ENCODE measurements at regions of chr15 and their contacts with region 1.

Region 1: DNA sequence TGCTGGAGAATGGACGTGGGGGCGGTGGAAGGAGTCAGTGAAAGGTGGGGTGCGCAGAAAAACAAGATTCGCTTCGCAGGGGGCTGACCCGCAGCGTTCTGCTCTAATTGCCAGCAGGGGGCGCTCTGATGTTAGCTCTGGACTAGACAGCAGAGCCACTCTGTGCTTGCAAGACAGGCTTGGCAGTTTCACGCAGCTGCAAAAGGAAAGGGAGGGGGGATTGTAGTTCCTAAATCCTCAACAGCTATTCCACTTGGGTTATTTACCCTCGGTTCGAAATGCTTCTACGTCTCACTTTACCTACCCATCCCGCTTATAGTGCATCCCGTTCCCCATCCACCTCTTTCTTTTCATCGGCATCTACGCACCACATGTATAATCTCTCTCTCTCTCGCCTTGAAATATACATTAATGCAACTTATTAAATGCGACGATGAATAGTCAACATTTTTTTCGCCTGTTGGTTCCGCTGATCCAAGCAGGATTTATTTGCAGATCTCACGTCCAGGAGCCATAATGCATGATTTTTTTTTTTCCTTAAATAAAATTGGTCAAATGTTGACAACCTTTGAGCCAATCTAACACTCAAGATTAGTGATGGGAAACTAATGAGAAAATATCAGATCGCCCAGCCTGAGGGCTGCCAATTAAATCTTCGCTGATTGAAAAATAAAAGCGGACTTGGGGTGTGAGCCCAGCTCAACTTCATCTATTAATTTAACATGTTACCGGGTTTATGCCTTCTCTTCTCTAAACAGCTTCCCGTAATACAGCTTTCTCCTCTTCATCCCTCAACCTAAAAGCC is 216.4 kb downstream of the MEIS2 start:
- DNase-seq: peak in 1 of 2 experiments; percentile 93
- H3K4me3 ChIP-seq: peak overlapping the region in 1 of 4 experiments; percentile 45; a peak in 2 of 8 replicates
- H3K27ac ChIP-seq: no peak overlapping the region
- H3K4me1 ChIP-seq: peaks cover 21 to 49% (median 28%) of the 10 kb centered on the region in 4 experiments
- H3K27me3 ChIP-seq: peaks cover 77 to 100% (median 92%) of the 10 kb centered on the region in 4 experiments
- CTCF ChIP-seq: peak; percentile 85 to 88 (median 85)
- EP300 ChIP-seq: no peak
- POLR2A ChIP-seq: no peak
- RAD21 ChIP-seq: peak; percentile 96 to 97

Region 2: DNA sequence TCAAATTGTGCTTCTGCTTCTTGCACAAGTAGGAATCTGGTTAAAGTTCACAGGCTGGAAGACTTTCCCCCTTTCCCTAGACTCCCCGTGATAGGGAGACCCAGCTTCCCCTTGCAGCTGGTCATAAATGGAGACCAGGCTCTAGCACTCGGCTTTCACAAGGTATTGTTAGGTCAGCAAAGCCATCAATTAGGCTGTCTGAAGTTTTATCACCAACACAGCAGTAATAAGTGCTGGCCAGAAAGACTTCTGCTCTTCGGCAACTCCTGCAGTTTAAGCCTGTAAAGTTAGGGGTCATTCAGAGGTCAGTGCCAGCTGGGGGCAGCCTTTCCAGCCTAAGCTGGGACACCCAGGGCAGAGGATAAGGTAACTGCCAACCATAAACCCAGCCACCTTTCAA is 13.0 kb after region 1 on chr15:
- CTCF ChIA-PET with region 1: interaction called, 13 read pairs
- POLR2A ChIA-PET with region 1: interaction called, 3 read pairs
- DNase-seq: no peak
- H3K4me3 ChIP-seq: peak overlapping the region in 1 of 4 experiments; percentile 2; a peak in 1 of 8 replicates
- H3K27ac ChIP-seq: no peak overlapping the region
- H3K4me1 ChIP-seq: peaks cover 0 to 10% (median 6%) of the 10 kb centered on the region in 4 experiments; a peak in 3 of 7 replicates
- H3K27me3 ChIP-seq: peaks cover 0 to 5% (median 1%) of the 10 kb centered on the region in 4 experiments; a peak in 2 of 7 replicates
- CTCF ChIP-seq: no peak
- EP300 ChIP-seq: no peak
- POLR2A ChIP-seq: no peak
- RAD21 ChIP-seq: no peak

Region 3: DNA sequence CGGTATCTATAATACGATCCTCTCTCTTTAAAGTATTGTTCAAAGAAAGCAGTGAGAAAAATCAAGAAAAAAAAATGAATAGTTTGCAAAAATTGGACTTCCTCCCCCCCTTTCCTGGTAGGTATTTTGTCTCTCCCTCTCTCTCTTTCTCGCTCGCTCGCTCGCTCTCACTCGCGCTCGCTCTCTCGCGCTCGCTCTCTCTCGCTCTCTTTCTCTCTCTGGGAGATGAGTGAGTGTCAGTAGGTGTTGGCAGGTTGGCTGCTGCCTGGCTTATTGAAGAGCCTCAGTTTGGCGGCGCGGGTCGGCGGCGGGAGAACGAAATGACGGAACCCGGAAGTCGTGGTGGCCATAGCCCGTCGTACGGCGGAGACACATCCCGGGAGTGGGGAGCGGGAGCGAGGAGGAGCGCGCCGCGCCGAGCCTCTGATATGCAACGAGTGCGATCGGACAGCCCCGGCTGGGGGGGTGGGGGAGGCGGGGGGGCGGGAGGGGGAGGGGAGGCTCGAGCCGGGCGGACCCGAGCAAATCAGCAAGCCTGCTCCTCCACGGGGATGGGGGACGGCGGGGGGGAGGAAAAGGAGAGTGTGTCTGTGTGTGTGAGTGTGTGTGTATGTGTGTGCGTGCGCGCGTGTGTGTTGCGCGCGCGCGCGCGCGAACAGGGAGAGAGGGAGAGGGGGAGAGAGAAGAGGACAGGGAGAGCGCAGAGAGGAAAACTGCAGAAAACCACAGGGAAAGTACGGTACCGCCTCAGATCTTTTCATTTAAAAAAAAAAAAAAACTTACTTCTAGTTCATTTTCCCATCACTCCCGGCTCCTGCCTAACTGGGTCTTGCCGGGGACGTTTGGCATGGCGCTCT is 216.4 kb after region 1 on chr15 and contains the start of gene MEIS2:
- CTCF ChIA-PET with region 1: interaction called, 130 read pairs
- POLR2A ChIA-PET with region 1: interaction called, 12 read pairs
- DNase-seq: peak in 1 of 2 experiments; percentile 82
- H3K4me3 ChIP-seq: peak within 1 kb of the TSS; percentile 33 to 81 (median 73)
- H3K27ac ChIP-seq: no peak within 1 kb of the TSS
- H3K4me1 ChIP-seq: peaks cover 4 to 31% (median 17%) of the 10 kb centered on the region in 4 experiments
- H3K27me3 ChIP-seq: peaks cover 36 to 79% (median 69%) of the 10 kb centered on the region in 4 experiments
- CTCF ChIP-seq: no peak
- EP300 ChIP-seq: no peak
- POLR2A ChIP-seq: no peak
- RAD21 ChIP-seq: peak in 1 of 2 experiments; percentile 14; a peak in 1 of 4 replicates
- total RNA-seq, gene MEIS2: 0.22 and 0.65 TPM in 2 replicates

Measured in H1 (cell line).